GM13976 (cell line): ENCODE measurements at regions of chr22 and their contacts with region 1.

Region 1: GRCh38 chr22:46116491-46116958 is 33.8 kb upstream of the PPARA start:
- DNase-seq: peak; percentile 98
- CTCF ChIP-seq: peak; percentile 89

Region 2: GRCh38 chr22:45553351-45554039 is 563.0 kb before region 1 on chr22:
- in situ Hi-C with region 1: loop called (anchors 25 kb)
- DNase-seq: peak; percentile 83
- CTCF ChIP-seq: peak; percentile 71

Region 3: DNA sequence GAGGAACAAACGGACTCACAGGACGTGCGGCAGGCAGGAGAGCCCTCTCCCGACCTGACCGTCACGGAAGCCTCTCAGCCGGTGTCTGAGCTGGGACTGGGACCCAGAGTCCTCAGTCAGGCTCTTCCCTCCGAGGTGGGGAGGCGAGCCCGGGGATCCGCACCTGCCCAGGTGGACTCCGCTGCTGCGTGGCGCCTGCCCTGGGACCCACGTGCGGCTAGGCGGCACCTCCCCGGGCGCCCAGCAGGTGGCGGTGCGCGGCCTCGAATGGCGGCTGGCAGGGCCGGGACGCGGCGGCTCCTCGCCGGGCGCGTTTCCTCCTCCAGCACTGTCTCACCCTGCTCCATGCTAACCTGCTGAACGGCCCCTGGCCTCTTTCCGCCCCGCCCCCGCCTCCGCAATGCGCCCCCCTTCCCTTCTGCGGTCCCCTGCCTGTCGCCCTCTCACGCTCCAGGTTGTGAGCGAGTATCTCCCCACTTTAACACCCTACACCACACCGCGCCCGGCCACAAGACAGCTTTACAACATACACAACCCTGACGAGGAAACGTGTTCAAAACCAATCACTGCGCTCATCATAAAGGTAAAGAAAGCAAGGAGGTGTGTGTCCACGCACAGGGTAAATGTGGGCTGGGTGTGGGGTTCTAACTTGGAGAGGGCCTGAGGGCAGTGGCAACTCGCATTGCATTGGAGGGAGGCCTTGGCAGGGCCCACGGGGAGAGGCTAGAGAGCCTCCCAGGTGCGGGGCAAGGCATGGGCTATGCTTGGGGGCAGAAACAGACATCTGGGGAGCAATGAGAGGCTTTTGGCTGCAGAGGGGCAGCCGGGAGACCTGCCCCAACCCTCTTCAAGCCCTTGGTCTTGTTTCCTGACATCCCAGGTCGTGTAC is 470.8 kb before region 1 on chr22:
- in situ Hi-C with region 1: loop called (anchors 25 kb)
- DNase-seq: peak; percentile 93
- CTCF ChIP-seq: peak; percentile 96

Region 4: DNA sequence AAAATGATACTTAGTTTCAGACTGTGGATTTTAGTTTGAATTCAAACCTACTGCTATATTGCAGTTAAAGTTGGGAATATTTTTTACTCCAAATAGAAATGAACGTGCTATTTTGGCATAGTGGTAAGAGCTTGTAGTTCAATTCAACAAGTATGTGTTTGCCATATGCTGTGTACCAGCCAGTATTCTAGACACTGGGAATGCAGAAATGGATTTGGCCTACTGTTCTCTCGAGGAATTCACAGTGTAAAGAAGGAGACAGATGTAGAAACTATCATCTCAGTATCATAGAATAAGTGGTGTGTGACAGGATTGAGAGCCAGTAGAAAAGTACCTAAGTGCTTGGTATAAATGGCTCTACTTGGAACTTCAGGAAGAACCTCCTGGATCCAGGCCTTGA is 364.5 kb before region 1 on chr22:
- in situ Hi-C with region 1: no loop called
- DNase-seq: no peak
- CTCF ChIP-seq: no peak

Region 5: GRCh38 chr22:46006379-46007002 is 110.0 kb before region 1 on chr22:
- in situ Hi-C with region 1: loop called (anchors 5 kb)
- DNase-seq: peak; percentile 96
- CTCF ChIP-seq: peak; percentile 93

Region 6: DNA sequence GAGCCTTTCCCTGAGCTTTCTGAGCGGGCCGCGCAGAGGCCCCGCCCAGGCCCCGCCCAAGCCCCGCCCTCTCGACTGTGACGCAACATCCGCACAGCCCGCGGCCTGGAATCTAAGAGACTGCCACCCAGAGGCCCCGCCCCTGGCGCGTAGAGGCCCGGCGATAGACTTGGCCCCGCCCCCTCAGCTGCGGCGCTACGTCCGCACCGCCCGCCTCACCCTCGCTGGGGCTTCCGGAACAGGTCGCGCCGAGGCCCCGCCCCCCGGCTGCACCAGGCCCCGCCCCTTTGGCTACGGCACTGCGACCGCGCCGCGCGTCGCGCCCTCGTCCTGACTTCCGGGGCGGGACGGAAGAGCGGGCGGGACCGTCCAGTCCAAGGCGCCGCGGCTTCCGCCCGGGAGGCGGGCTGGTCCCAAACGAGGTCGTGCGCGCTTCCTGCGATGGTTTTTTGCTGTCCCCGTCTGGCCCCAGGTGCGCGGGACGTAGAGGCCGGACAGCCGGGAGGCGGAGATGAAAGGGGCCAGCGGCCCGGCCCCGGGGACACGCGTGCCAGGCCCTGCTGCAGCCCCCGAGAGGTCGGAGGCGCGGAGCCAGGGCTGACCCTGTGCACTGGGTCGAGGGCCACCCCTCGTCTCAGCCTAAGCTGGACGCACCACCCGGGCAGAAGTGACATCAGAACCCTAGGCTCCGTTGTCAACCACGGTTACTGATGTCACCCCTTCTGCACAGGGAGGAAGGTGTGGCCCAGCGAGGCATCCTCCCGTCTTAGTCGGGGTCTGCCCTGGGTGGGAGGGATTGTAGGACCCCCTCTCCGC is 80.6 kb before region 1 on chr22:
- in situ Hi-C with region 1: no loop called
- DNase-seq: peak; percentile 100
- CTCF ChIP-seq: no peak

Region 7: DNA sequence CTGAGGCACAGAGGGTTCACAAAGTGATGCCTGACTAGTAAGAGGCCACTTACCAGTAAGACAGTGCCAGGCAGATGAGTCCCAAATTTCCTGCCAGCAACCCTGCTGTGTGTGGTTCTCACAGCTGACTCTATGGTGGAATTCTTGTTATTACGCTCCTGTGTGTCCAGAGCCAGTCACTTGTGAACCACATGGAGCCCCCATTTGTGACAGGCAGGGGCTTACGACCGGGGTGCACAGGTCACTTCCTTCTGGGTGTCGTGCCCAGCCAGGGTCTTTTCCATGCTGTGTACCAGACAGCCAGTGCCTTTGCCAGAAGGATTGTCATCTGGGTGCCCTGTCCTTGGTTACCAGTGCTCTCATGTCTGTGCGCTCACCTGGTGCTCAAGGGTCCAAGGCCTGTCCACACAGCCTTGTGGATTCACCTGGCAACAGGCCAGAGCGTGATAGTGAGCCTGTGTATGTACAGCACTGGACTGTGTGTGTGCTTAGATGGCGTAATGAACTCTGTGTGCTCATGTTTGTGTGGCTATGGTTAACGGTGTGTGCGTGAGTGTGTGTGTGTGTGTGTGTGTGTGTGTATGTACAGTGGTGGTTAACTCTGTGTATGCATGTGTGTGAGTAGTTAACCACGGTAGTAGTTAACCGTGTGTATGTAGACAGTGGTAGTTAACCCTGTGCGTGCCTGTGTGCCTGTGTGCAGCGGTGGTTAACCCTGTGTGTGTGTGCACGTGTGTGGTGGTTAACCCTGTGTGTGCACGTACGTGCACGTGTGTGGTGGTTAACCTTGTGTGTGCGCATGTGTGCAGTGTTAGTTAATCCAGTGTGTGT is 522.3 kb after region 1 on chr22:
- in situ Hi-C with region 1: no loop called
- DNase-seq: no peak
- CTCF ChIP-seq: no peak